ENCODE measurements at regions of chr3 and their contacts with region 1.

Region 1: GRCh38 chr3:130950641-130951040 is 56.8 kb downstream of the ATP2C1 start:
- DNase-seq: peak; percentile 78
- ATAC-seq: peak; percentile 86
- H3K4me3 ChIP-seq: no peak overlapping the region
- H3K27ac ChIP-seq: peak overlapping the region; percentile 20; the same call in 1 of the 2 replicates
- H3K4me1 ChIP-seq: peaks cover 3% of the 10 kb centered on the region
- H3K27me3 ChIP-seq: no peaks in the 10 kb centered on the region
- CTCF ChIP-seq: no peak
- POLR2A ChIP-seq: no peak
- RAD21 ChIP-seq: no peak

Region 2: GRCh38 chr3:130900959-130901358 is 49.7 kb before region 1 on chr3:
- CTCF ChIA-PET with region 1: no interaction called
- POLR2A ChIA-PET with region 1: no interaction called
- dilution Hi-C with region 1: no loop called
- in situ Hi-C with region 1: no loop called
- intact Hi-C with region 1: loop called (anchors 5 kb)
- DNase-seq: peak; percentile 14
- ATAC-seq: peak; percentile 62
- H3K4me3 ChIP-seq: no peak overlapping the region
- H3K27ac ChIP-seq: no peak overlapping the region
- H3K4me1 ChIP-seq: peaks cover 5% of the 10 kb centered on the region
- H3K27me3 ChIP-seq: no peaks in the 10 kb centered on the region
- CTCF ChIP-seq: no peak
- POLR2A ChIP-seq: no peak
- RAD21 ChIP-seq: no peak

Measured in IMR-90 (cell line).